Activated B cell treated with CpG ODN at 0.5 μM for 24 hours (primary cell): ENCODE measurements at regions of chr5 and their contacts with region 1.

Region 1: DNA sequence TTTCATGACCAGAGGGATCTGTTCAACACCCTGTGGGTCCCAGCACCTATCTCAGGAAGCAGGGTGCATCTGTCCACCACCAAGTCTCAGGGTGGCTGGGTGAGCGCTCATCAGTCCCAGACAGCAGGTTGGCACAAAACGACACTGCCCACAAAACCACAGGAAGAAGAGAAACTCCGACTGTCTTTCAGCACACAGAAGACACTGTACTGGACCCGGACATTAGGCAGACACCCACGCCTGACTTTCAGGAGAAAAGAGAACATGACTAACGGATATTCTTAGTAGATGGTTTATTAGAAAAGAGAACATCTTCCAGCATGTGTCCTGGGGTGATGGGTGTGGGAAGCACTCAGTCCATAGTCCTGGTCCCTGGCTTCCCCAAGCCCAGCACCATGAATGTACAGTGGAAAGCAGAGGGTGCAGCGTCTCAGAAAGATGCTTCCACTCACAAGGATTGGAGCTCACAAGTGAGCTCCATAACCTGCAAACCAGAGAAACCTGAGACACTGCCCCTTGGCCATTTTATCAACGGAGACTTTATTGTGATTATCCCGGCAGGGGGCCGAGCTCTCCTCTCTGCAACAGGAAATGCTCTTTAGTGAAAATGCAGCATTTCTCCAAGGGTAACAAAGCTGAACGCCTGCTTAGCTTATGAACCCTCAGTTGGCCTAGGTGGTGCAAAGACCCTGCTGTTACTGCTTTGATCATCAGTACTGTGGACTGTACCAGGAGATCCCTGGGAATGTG is 35.8 kb upstream of the LCP2 start:
- DNase-seq: no peak
- ATAC-seq: no peak
- H3K4me3 Mint-ChIP-seq: peak overlapping the region; percentile 25
- H3K27ac Mint-ChIP-seq: no peak overlapping the region
- H3K4me1 Mint-ChIP-seq: peaks cover 10% of the 10 kb centered on the region
- H3K27me3 Mint-ChIP-seq: no peaks in the 10 kb centered on the region
- CTCF ChIP-seq: no peak

Region 2: GRCh38 chr5:170293273-170293672 is 40.1 kb before region 1 on chr5:
- CTCF ChIA-PET with region 1: interaction called, 22 read pairs
- POLR2A ChIA-PET with region 1: interaction called, 34 read pairs
- intact Hi-C with region 1: loop called (anchors 1 kb)
- DNase-seq: peak; percentile 60
- ATAC-seq: peak; percentile 88
- H3K4me3 Mint-ChIP-seq: peak overlapping the region; percentile 12
- H3K27ac Mint-ChIP-seq: peak overlapping the region; percentile 37
- H3K4me1 Mint-ChIP-seq: peaks cover 57% of the 10 kb centered on the region
- H3K27me3 Mint-ChIP-seq: peaks cover 15% of the 10 kb centered on the region
- CTCF ChIP-seq: no peak

Region 3: DNA sequence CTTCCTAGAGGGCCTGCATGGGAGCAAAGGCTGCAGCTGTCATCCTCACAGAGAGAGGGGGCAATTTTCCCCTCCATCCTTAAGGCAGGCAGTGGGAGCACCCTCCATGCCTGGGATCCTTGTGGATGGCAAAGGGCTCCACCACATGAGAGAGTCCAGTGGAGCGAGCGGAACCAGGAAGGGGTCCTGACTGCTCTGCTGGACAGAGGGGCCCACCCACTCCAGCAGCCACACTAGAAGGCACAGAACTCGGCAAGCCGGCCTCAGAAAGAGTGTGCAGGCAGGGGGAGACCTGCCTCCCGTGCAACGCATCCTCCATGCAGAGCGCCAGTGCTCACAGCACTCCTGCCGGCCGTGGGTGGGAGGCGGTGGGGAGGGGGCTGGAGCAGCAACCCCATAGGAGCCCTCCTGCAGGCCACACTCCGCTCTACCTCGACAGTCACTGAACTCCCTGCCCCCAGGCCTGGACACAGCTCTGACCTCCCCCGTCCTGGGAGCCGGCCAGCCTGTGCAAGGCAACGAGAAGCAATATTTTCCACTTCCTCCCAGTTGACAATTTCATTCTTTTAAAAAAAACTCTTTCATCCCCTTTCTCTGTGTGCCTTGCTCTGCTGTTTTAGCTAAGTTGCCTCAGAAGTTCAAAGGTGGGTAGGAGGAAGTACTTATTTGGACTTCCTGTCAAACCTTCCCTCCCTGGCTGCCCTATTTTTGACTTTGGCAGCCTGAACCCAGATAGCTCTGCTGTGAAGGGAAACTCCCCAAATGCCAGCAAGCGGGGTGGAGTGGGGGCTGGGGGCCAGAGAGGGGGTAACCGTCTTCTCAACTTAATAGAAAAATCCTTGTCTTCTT is 30.5 kb before region 1 on chr5:
- CTCF ChIA-PET with region 1: interaction called, 22 read pairs
- POLR2A ChIA-PET with region 1: interaction called, 34 read pairs
- intact Hi-C with region 1: loop called (anchors 1 kb)
- DNase-seq: no peak
- ATAC-seq: peak; percentile 37
- H3K4me3 Mint-ChIP-seq: peak overlapping the region; percentile 53
- H3K27ac Mint-ChIP-seq: no peak overlapping the region
- H3K4me1 Mint-ChIP-seq: peaks cover 47% of the 10 kb centered on the region
- H3K27me3 Mint-ChIP-seq: no peaks in the 10 kb centered on the region
- CTCF ChIP-seq: no peak

Region 4: GRCh38 chr5:170357955-170358444 is 24.7 kb after region 1 on chr5:
- CTCF ChIA-PET with region 1: no interaction called
- POLR2A ChIA-PET with region 1: no interaction called
- intact Hi-C with region 1: no loop called
- DNase-seq: no peak
- ATAC-seq: peak; percentile 31
- H3K4me3 Mint-ChIP-seq: no peak overlapping the region
- H3K27ac Mint-ChIP-seq: no peak overlapping the region
- H3K4me1 Mint-ChIP-seq: peaks cover 11% of the 10 kb centered on the region
- H3K27me3 Mint-ChIP-seq: peaks cover 18% of the 10 kb centered on the region
- CTCF ChIP-seq: no peak

Region 5: DNA sequence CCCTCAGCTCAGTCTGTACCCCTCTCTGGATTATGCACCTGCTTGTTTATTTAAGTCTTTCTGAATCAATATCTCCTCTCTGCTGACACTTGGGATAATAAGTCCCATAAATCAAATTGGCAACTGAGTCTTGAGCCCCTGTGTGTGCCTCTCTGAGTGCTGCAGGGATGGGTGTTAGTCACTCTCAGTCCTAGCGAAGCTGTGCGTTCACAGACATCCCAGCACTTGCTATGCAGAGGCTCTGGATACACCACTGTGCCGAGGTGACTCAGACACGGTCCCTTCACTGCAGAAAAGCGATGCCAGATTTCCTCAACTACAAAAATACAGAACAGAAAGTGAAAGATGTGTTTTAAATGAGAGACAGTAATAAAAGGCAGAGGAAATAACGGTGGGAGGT is 59.9 kb after region 1 on chr5:
- CTCF ChIA-PET with region 1: interaction called, 3 read pairs
- POLR2A ChIA-PET with region 1: no interaction called
- intact Hi-C with region 1: loop called (anchors 2 kb)
- DNase-seq: no peak
- ATAC-seq: peak; percentile 89
- H3K4me3 Mint-ChIP-seq: peak overlapping the region; percentile 29
- H3K27ac Mint-ChIP-seq: peak overlapping the region; percentile 73
- H3K4me1 Mint-ChIP-seq: peaks cover 37% of the 10 kb centered on the region
- H3K27me3 Mint-ChIP-seq: peaks cover 16% of the 10 kb centered on the region
- CTCF ChIP-seq: no peak